IMR-90 (cell line): ENCODE measurements at regions of chr18 and their contacts with region 1.

Region 1: GRCh38 chr18:21163647-21164547 is 52.3 kb upstream of the ROCK1 start:
- DNase-seq: peak; percentile 93
- ATAC-seq: peak; percentile 98
- H3K4me3 ChIP-seq: peak overlapping the region; percentile 15; the same call in 1 of the 2 replicates
- H3K27ac ChIP-seq: peak overlapping the region; percentile 99
- H3K4me1 ChIP-seq: peaks cover 3% of the 10 kb centered on the region
- H3K27me3 ChIP-seq: no peaks in the 10 kb centered on the region
- CTCF ChIP-seq: no peak
- POLR2A ChIP-seq: no peak
- RAD21 ChIP-seq: no peak

Region 2: GRCh38 chr18:20996418-20996817 is 167.5 kb before region 1 on chr18:
- CTCF ChIA-PET with region 1: no interaction called
- POLR2A ChIA-PET with region 1: no interaction called
- dilution Hi-C with region 1: no loop called
- in situ Hi-C with region 1: loop called (anchors 10 kb)
- intact Hi-C with region 1: no loop called
- DNase-seq: no peak
- ATAC-seq: no peak
- H3K4me3 ChIP-seq: no peak overlapping the region
- H3K27ac ChIP-seq: no peak overlapping the region
- H3K4me1 ChIP-seq: no peaks in the 10 kb centered on the region
- H3K27me3 ChIP-seq: no peaks in the 10 kb centered on the region
- CTCF ChIP-seq: no peak
- POLR2A ChIP-seq: no peak
- RAD21 ChIP-seq: no peak

Region 3: GRCh38 chr18:21074336-21075323 is 89.3 kb before region 1 on chr18:
- CTCF ChIA-PET with region 1: no interaction called
- POLR2A ChIA-PET with region 1: no interaction called
- dilution Hi-C with region 1: no loop called
- in situ Hi-C with region 1: no loop called
- intact Hi-C with region 1: loop called (anchors 5 kb)
- DNase-seq: no peak
- ATAC-seq: no peak
- H3K4me3 ChIP-seq: no peak overlapping the region
- H3K27ac ChIP-seq: no peak overlapping the region
- H3K4me1 ChIP-seq: no peaks in the 10 kb centered on the region
- H3K27me3 ChIP-seq: no peaks in the 10 kb centered on the region
- CTCF ChIP-seq: no peak
- POLR2A ChIP-seq: no peak
- RAD21 ChIP-seq: no peak

Region 4: GRCh38 chr18:21111341-21112139 is 52.4 kb before region 1 on chr18 and contains the start of gene ROCK1:
- CTCF ChIA-PET with region 1: no interaction called
- POLR2A ChIA-PET with region 1: interaction called, 4 read pairs
- dilution Hi-C with region 1: no loop called
- in situ Hi-C with region 1: no loop called
- intact Hi-C with region 1: loop called (anchors 1 kb)
- DNase-seq: peak; percentile 96
- ATAC-seq: peak; percentile 92
- H3K4me3 ChIP-seq: peak within 1 kb of the TSS; percentile 91
- H3K27ac ChIP-seq: peak within 1 kb of the TSS; percentile 99
- H3K4me1 ChIP-seq: peaks cover 7% of the 10 kb centered on the region
- H3K27me3 ChIP-seq: no peaks in the 10 kb centered on the region
- CTCF ChIP-seq: no peak
- POLR2A ChIP-seq: peak; percentile 79
- RAD21 ChIP-seq: no peak; the same call in 1 of the 2 replicates
- total RNA-seq, gene ROCK1: 17.0 and 33.6 TPM in 2 replicates